ENCODE measurements at regions of chr16 and their contacts with region 1.

Region 1: GRCh38 chr16:25006469-25007055 is 8.6 kb downstream of the ARHGAP17 start:
- DNase-seq: peak in 2 of 3 donors; percentile 42 to 57
- H3K4me3 ChIP-seq: no peak overlapping the region
- H3K27ac ChIP-seq: no peak overlapping the region
- H3K4me1 ChIP-seq: peaks cover 11 to 39% (median 19%) of the 10 kb centered on the region in 4 experiments
- H3K27me3 ChIP-seq: no peaks in the 10 kb centered on the region

Region 2: DNA sequence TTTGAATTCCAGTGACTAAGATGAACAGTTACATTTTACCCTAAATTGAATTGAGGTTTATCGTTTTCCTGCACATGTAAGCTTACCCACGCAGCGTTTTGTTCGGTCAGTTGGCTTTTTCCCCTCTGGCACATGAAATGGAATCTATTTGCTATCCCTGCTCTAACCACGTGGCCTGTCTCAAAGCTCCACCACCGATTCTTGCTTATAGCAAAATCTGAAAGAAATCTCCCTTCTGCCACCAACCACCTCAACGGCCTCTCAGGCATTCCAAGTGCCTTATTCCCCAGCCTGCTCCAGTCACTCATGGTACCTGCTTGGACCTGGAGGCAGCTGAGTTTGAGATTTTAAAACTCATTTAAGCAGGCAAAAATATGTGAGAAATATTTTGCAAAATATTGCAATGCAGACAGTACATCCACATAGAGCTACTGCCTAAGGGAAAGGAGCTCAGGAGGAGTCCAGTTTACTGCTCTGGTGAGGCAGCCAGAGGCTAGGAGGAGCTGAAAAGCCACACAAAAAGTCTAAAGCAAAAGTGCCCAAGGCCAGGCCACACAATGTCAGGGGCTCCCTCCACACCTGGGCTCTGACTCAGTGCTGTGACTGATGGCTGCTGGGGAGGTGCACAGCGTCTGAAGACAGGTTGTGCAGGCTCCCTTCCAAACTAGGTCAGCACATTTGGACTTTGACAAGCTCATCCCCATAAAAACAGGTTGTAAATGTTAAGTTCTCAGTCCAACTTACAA is 17.8 kb before region 1 on chr16:
- CTCF ChIA-PET with region 1: interaction called, 22 read pairs
- POLR2A ChIA-PET with region 1: interaction called, 5 read pairs
- DNase-seq: peak; percentile 41 to 84 (median 68)
- H3K4me3 ChIP-seq: peak overlapping the region in 3 of 7 experiments; percentile 24 to 59 (median 25)
- H3K27ac ChIP-seq: peak overlapping the region; percentile 34 to 62
- H3K4me1 ChIP-seq: peaks cover 14 to 59% (median 49%) of the 10 kb centered on the region in 4 experiments
- H3K27me3 ChIP-seq: no peaks in the 10 kb centered on the region